ENCODE measurements at regions of chr12 and their contacts with region 1.

Region 1: GRCh38 chr12:55073043-55074022 is 52.9 kb upstream of the OR9K2 start:
- DNase-seq: peak; percentile 58 to 83 (median 69)
- H3K4me3 ChIP-seq: no peak overlapping the region
- H3K4me3 Mint-ChIP-seq: no peak overlapping the region
- H3K27ac ChIP-seq: no peak overlapping the region
- H3K27ac Mint-ChIP-seq: peak overlapping the region in 1 of 8 donors; percentile 12
- H3K4me1 ChIP-seq: no peaks in the 10 kb centered on the region
- H3K4me1 Mint-ChIP-seq: peaks cover 0 to 4% (median 2%) of the 10 kb centered on the region in 3 donors
- H3K27me3 ChIP-seq: no peaks in the 10 kb centered on the region
- H3K27me3 Mint-ChIP-seq: peaks cover 26 to 43% of the 10 kb centered on the region in 2 donors

Region 2: GRCh38 chr12:54701940-54702592 is 371.3 kb before region 1 on chr12:
- CTCF ChIA-PET with region 1: interaction called, 31 read pairs
- POLR2A ChIA-PET with region 1: no interaction called
- DNase-seq: peak in 2 of 5 donors; percentile 37 to 47
- H3K4me3 ChIP-seq: no peak overlapping the region
- H3K4me3 Mint-ChIP-seq: no peak overlapping the region
- H3K27ac ChIP-seq: no peak overlapping the region
- H3K27ac Mint-ChIP-seq: no peak overlapping the region
- H3K4me1 ChIP-seq: no peaks in the 10 kb centered on the region
- H3K4me1 Mint-ChIP-seq: no peaks in the 10 kb centered on the region
- H3K27me3 ChIP-seq: no peaks in the 10 kb centered on the region
- H3K27me3 Mint-ChIP-seq: peaks cover 6 to 7% of the 10 kb centered on the region in 2 donors

Region 3: DNA sequence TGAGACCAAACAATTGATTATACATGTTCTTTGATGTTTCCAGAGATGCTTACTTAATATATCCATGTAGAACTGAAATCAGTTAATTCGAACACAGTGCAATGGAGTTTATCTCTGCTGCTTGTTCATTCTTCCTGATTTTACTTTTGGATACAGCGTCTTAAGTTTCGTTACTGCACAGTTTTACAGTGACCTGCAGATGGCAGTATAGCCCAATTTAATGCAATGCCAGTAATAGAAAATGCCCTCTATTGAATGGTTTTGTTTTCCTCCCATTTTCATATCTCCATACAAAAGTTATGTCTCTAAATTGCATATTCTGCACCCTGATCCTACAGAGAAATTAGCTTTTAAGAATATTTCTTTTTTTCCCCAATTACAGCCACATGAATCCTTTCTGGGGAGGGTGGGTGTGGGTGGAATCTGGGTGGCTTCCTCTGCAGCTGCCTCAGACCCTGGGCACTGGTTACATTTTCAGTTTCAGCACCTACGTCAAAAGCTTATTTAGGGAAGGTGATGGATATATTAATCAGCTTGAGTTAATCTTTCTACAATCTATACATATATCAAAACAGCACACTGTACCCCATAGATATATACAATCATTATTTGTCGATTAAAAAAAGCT is 324.0 kb before region 1 on chr12:
- CTCF ChIA-PET with region 1: interaction called, 56 read pairs
- POLR2A ChIA-PET with region 1: interaction called, 4 read pairs
- DNase-seq: peak in 4 of 5 donors; percentile 20 to 57 (median 42)
- H3K4me3 ChIP-seq: no peak overlapping the region
- H3K4me3 Mint-ChIP-seq: peak overlapping the region in 6 of 7 donors; percentile 10 to 73 (median 60)
- H3K27ac ChIP-seq: no peak overlapping the region
- H3K27ac Mint-ChIP-seq: peak overlapping the region in 3 of 8 donors; percentile 6 to 64 (median 22)
- H3K4me1 ChIP-seq: peaks cover 16% of the 10 kb centered on the region
- H3K4me1 Mint-ChIP-seq: peaks cover 15 to 24% (median 23%) of the 10 kb centered on the region in 3 donors
- H3K27me3 ChIP-seq: no peaks in the 10 kb centered on the region
- H3K27me3 Mint-ChIP-seq: peaks cover 0 to 6% of the 10 kb centered on the region in 2 donors

Region 4: DNA sequence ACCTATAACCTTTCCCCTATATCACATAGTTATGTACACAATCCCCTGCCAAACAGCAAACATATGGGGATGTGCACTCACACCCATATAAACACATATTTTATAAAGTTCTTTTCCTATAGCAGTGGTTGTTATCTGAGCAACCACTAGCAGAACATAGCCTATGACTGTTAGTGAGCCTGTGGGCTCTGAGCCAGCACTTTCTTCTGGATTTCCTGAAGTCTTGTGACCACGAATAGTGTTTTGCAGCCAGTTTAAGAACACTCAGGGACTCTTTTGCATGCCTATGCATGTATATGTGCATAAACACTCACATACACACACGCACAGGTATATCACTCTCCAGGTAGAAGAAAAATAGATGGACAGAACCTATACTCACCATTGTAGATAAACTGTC is 105.9 kb before region 1 on chr12:
- CTCF ChIA-PET with region 1: interaction called, 12 read pairs
- POLR2A ChIA-PET with region 1: no interaction called
- DNase-seq: peak in 1 of 5 donors; percentile 49
- H3K4me3 ChIP-seq: peak overlapping the region; percentile 21
- H3K4me3 Mint-ChIP-seq: peak overlapping the region in 4 of 7 donors; percentile 3 to 60 (median 42)
- H3K27ac ChIP-seq: no peak overlapping the region
- H3K27ac Mint-ChIP-seq: peak overlapping the region; percentile 6 to 93 (median 73)
- H3K4me1 ChIP-seq: peaks cover 52% of the 10 kb centered on the region
- H3K4me1 Mint-ChIP-seq: peaks cover 43 to 89% (median 61%) of the 10 kb centered on the region in 3 donors
- H3K27me3 ChIP-seq: no peaks in the 10 kb centered on the region
- H3K27me3 Mint-ChIP-seq: no peaks in the 10 kb centered on the region

Region 5: GRCh38 chr12:54993161-54993835 is 80.0 kb before region 1 on chr12:
- CTCF ChIA-PET with region 1: interaction called, 365 read pairs
- POLR2A ChIA-PET with region 1: interaction called, 12 read pairs
- DNase-seq: peak; percentile 36 to 71 (median 64)
- H3K4me3 ChIP-seq: no peak overlapping the region
- H3K4me3 Mint-ChIP-seq: peak overlapping the region in 1 of 7 donors; percentile 42
- H3K27ac ChIP-seq: no peak overlapping the region
- H3K27ac Mint-ChIP-seq: peak overlapping the region in 3 of 8 donors; percentile 2 to 42 (median 4)
- H3K4me1 ChIP-seq: peaks cover 44% of the 10 kb centered on the region
- H3K4me1 Mint-ChIP-seq: peaks cover 39 to 46% (median 45%) of the 10 kb centered on the region in 3 donors
- H3K27me3 ChIP-seq: no peaks in the 10 kb centered on the region
- H3K27me3 Mint-ChIP-seq: peaks cover 0 to 2% of the 10 kb centered on the region in 2 donors

Measured in CD8-positive, alpha-beta memory T cell (primary cell).